Naive thymus-derived CD4-positive, alpha-beta T cell (primary cell): ENCODE measurements at regions of chr9 and their contacts with region 1.

Region 1: DNA sequence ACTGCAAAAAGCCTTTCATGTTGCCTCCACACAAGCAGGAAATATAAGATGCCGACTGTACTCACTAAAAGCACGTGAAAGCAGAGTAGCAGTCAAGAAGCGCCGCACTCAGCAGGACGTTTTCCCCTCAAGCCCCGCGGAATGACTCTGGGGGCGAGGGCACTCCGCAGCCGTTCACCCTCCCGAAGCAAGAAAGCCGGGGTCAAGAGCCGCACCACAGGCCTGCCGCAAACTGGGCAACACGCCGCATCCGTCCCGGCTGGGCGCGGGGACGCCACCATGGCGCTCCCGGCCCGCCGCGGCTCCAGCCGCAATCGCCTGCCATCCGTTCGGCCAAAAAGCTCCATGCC is 364 bp downstream of the RPS6 start:
- DNase-seq: peak in 1 of 9 donors; percentile 39
- ATAC-seq: peak; percentile 59
- H3K4me3 ChIP-seq: peak overlapping the region; percentile 89
- H3K4me3 Mint-ChIP-seq: peak overlapping the region; percentile 92 to 99 (median 98)
- H3K27ac ChIP-seq: peak overlapping the region; percentile 84
- H3K27ac Mint-ChIP-seq: peak overlapping the region; percentile 97 to 100 (median 99)
- H3K4me1 ChIP-seq: peaks cover 13 to 24% of the 10 kb centered on the region in 2 donors
- H3K4me1 Mint-ChIP-seq: peaks cover 29 to 50% (median 41%) of the 10 kb centered on the region in 7 donors
- H3K27me3 ChIP-seq: no peaks in the 10 kb centered on the region
- H3K27me3 Mint-ChIP-seq: no peaks in the 10 kb centered on the region

Region 2: GRCh38 chr9:19048966-19049916 is 330.4 kb before region 1 on chr9 and contains the start of gene RRAGA:
- CTCF ChIA-PET with region 1: no interaction called
- POLR2A ChIA-PET with region 1: interaction called, 12 read pairs
- intact Hi-C with region 1: loop called (anchors 1 kb)
- DNase-seq: peak; percentile 90 to 96 (median 95)
- ATAC-seq: peak; percentile 95
- H3K4me3 ChIP-seq: peak within 1 kb of the TSS; percentile 88
- H3K4me3 Mint-ChIP-seq: peak within 1 kb of the TSS; percentile 92 to 99 (median 95)
- H3K27ac ChIP-seq: peak within 1 kb of the TSS; percentile 85
- H3K27ac Mint-ChIP-seq: peak within 1 kb of the TSS; percentile 97 to 100 (median 98)
- H3K4me1 ChIP-seq: peaks cover 20% of the 10 kb centered on the region in 2 donors
- H3K4me1 Mint-ChIP-seq: peaks cover 6 to 50% (median 42%) of the 10 kb centered on the region in 7 donors
- H3K27me3 ChIP-seq: no peaks in the 10 kb centered on the region
- H3K27me3 Mint-ChIP-seq: peaks cover 0 to 2% (median 0%) of the 10 kb centered on the region in 5 donors
- total RNA-seq, gene RRAGA: 25.9 to 53.6 (median 51.9) TPM

Region 3: GRCh38 chr9:19184144-19184917 is 195.3 kb before region 1 on chr9:
- CTCF ChIA-PET with region 1: no interaction called
- POLR2A ChIA-PET with region 1: interaction called, 4 read pairs
- intact Hi-C with region 1: loop called (anchors 1 kb)
- DNase-seq: peak; percentile 32 to 75 (median 47)
- ATAC-seq: peak; percentile 97
- H3K4me3 ChIP-seq: no peak overlapping the region
- H3K4me3 Mint-ChIP-seq: peak overlapping the region in 9 of 10 donors; percentile 3 to 66 (median 34)
- H3K27ac ChIP-seq: peak overlapping the region; percentile 62
- H3K27ac Mint-ChIP-seq: peak overlapping the region; percentile 83 to 97 (median 93)
- H3K4me1 ChIP-seq: peaks cover 11 to 17% of the 10 kb centered on the region in 2 donors
- H3K4me1 Mint-ChIP-seq: peaks cover 6 to 19% (median 13%) of the 10 kb centered on the region in 7 donors
- H3K27me3 ChIP-seq: no peaks in the 10 kb centered on the region
- H3K27me3 Mint-ChIP-seq: no peaks in the 10 kb centered on the region

Region 4: DNA sequence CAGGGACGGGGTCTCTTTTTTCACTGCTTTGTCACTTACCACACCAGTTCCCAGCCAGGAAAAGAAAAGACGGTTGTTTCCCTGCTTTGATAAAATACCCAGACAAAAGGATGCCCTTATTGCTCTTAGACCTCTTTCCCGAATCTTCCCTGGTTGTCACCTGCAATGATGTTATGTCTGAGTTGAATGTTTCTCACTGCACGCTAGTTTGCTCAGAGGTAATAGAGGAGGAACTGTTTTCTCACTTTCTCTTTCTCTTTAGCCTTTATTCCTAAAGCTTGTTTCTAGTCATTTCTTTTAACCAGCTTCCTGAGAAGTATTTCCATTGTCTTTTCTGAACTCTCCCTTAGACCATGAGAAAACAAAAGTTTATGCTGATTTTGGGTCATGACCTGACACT is 62.1 kb after region 1 on chr9:
- CTCF ChIA-PET with region 1: interaction called, 6 read pairs
- POLR2A ChIA-PET with region 1: no interaction called
- intact Hi-C with region 1: loop called in 1 of 2 experiments (anchors 1 kb)
- DNase-seq: peak in 3 of 9 donors; percentile 5 to 12 (median 9)
- ATAC-seq: peak; percentile 57
- H3K4me3 ChIP-seq: no peak overlapping the region
- H3K4me3 Mint-ChIP-seq: peak overlapping the region; percentile 41 to 84 (median 73)
- H3K27ac ChIP-seq: peak overlapping the region; percentile 51
- H3K27ac Mint-ChIP-seq: peak overlapping the region; percentile 27 to 90 (median 86)
- H3K4me1 ChIP-seq: peaks cover 0 to 9% of the 10 kb centered on the region in 2 donors
- H3K4me1 Mint-ChIP-seq: peaks cover 9 to 21% (median 15%) of the 10 kb centered on the region in 7 donors
- H3K27me3 ChIP-seq: no peaks in the 10 kb centered on the region
- H3K27me3 Mint-ChIP-seq: no peaks in the 10 kb centered on the region

Region 5: GRCh38 chr9:19464764-19465585 is 85.3 kb after region 1 on chr9:
- CTCF ChIA-PET with region 1: no interaction called
- POLR2A ChIA-PET with region 1: interaction called, 5 read pairs
- intact Hi-C with region 1: loop called in 1 of 2 experiments (anchors 2 kb)
- DNase-seq: peak; percentile 48 to 82 (median 73)
- ATAC-seq: peak; percentile 94
- H3K4me3 ChIP-seq: peak overlapping the region; percentile 24
- H3K4me3 Mint-ChIP-seq: peak overlapping the region; percentile 71 to 97 (median 91)
- H3K27ac ChIP-seq: no peak overlapping the region
- H3K27ac Mint-ChIP-seq: peak overlapping the region in 6 of 9 donors; percentile 28 to 87 (median 70)
- H3K4me1 ChIP-seq: peaks cover 0 to 3% of the 10 kb centered on the region in 2 donors
- H3K4me1 Mint-ChIP-seq: peaks cover 4 to 17% (median 8%) of the 10 kb centered on the region in 7 donors
- H3K27me3 ChIP-seq: no peaks in the 10 kb centered on the region
- H3K27me3 Mint-ChIP-seq: peaks cover 0 to 4% (median 0%) of the 10 kb centered on the region in 5 donors

Region 6: GRCh38 chr9:19648672-19649071 is 269.0 kb after region 1 on chr9:
- CTCF ChIA-PET with region 1: no interaction called
- POLR2A ChIA-PET with region 1: no interaction called
- intact Hi-C with region 1: no loop called
- DNase-seq: no peak
- ATAC-seq: no peak
- H3K4me3 ChIP-seq: no peak overlapping the region
- H3K4me3 Mint-ChIP-seq: no peak overlapping the region
- H3K27ac ChIP-seq: no peak overlapping the region
- H3K27ac Mint-ChIP-seq: no peak overlapping the region
- H3K4me1 ChIP-seq: no peaks in the 10 kb centered on the region
- H3K4me1 Mint-ChIP-seq: no peaks in the 10 kb centered on the region
- H3K27me3 ChIP-seq: no peaks in the 10 kb centered on the region
- H3K27me3 Mint-ChIP-seq: peaks cover 0 to 29% (median 17%) of the 10 kb centered on the region in 5 donors